ENCODE measurements at regions of chr9 and their contacts with region 1.

Region 1: GRCh38 chr9:129944506-129945116 is 98.4 kb downstream of the FNBP1 start:
- DNase-seq: peak in 8 of 9 donors; percentile 38 to 78 (median 70)
- ATAC-seq: peak; percentile 96
- H3K4me3 ChIP-seq: peak overlapping the region; percentile 20
- H3K4me3 Mint-ChIP-seq: peak overlapping the region; percentile 8 to 76 (median 64)
- H3K27ac ChIP-seq: peak overlapping the region; percentile 49
- H3K27ac Mint-ChIP-seq: peak overlapping the region; percentile 68 to 94 (median 85)
- H3K4me1 ChIP-seq: peaks cover 36 to 47% of the 10 kb centered on the region in 2 donors
- H3K4me1 Mint-ChIP-seq: peaks cover 35 to 75% (median 60%) of the 10 kb centered on the region in 7 donors
- H3K27me3 ChIP-seq: no peaks in the 10 kb centered on the region
- H3K27me3 Mint-ChIP-seq: no peaks in the 10 kb centered on the region

Region 2: DNA sequence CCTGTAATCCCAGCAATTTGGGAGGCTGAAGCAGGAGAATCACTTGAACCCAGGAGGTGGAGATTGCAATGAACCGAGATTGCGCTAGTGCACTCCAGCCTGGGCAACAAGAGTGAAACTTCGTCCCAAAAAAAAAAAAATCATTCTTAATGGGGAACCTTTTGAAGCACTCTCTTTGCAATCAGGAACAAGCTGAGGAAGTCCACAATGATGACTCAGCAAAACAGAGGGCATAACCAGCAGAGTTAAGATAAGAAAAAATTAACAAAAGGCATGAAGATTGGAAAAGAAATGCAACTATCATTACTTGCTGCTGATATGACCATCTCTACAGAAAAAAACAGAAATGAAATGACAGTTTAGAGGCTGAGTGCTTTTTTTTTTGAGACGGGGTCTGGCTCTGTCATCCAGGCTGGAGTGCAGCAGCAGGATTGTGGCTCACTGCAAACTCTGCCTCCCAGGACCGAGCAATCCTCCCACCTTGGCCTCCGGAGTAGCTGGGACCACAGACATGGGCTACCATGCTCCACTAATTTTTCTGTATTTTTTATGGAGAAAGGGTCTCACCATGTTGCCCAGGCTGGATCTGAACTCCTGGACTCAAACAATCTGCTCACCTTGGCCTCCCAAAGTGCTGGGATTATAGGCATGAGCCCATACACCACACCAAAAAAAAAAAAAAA is 10.4 kb after region 1 on chr9:
- CTCF ChIA-PET with region 1: no interaction called
- POLR2A ChIA-PET with region 1: interaction called, 60 read pairs
- intact Hi-C with region 1: no loop called
- DNase-seq: no peak
- ATAC-seq: peak; percentile 61
- H3K4me3 ChIP-seq: no peak overlapping the region
- H3K4me3 Mint-ChIP-seq: peak overlapping the region in 4 of 10 donors; percentile 26 to 52 (median 33)
- H3K27ac ChIP-seq: peak overlapping the region; percentile 3
- H3K27ac Mint-ChIP-seq: peak overlapping the region in 8 of 9 donors; percentile 5 to 81 (median 68)
- H3K4me1 ChIP-seq: peaks cover 7 to 29% of the 10 kb centered on the region in 2 donors
- H3K4me1 Mint-ChIP-seq: peaks cover 12 to 43% (median 39%) of the 10 kb centered on the region in 7 donors
- H3K27me3 ChIP-seq: no peaks in the 10 kb centered on the region
- H3K27me3 Mint-ChIP-seq: no peaks in the 10 kb centered on the region

Region 3: DNA sequence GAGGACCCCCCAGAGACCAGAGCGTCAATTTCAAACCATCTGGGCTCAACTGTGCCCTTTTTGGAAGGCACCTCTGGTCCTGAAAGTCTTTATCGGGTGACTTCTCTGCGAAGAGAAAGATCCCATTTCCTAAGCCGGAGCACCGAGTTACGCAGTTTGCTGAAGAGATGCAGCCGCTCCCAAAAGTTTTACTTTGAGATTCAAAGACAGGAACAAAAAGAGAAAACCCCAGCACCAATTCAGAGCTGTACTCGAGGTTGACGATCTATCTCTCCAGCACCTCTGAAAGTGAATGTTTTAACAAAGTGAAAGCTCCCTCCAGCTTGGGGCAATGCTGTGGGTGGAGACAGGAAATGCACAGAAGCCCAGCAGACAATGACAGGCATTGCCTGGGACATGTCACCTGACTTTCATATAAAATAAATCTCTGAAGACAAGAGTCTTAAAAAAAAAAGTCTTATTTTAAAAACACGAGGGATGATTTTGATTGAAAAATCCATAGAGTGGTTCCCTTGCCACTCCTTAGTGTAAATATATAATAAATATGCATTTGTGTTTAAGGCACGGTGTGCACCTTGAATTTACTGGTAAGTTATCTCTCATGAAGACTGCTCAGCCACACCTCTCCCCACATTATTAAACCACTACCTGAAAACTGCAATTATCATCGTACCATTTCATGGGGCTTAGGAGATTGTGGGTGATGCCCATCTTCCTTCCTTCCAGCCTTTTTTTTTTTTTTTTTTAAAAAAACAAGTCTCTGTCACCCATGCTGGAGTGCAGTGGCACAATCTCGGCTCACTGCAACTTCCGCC is 18.5 kb after region 1 on chr9:
- CTCF ChIA-PET with region 1: no interaction called
- POLR2A ChIA-PET with region 1: interaction called, 60 read pairs
- intact Hi-C with region 1: loop called (anchors 1 kb)
- DNase-seq: peak; percentile 23 to 92 (median 87)
- ATAC-seq: peak; percentile 98
- H3K4me3 ChIP-seq: peak overlapping the region; percentile 80
- H3K4me3 Mint-ChIP-seq: peak overlapping the region; percentile 66 to 95 (median 88)
- H3K27ac ChIP-seq: peak overlapping the region; percentile 92
- H3K27ac Mint-ChIP-seq: peak overlapping the region; percentile 89 to 99 (median 97)
- H3K4me1 ChIP-seq: peaks cover 34 to 47% of the 10 kb centered on the region in 2 donors
- H3K4me1 Mint-ChIP-seq: peaks cover 54 to 80% (median 67%) of the 10 kb centered on the region in 7 donors
- H3K27me3 ChIP-seq: no peaks in the 10 kb centered on the region
- H3K27me3 Mint-ChIP-seq: no peaks in the 10 kb centered on the region

Region 4: DNA sequence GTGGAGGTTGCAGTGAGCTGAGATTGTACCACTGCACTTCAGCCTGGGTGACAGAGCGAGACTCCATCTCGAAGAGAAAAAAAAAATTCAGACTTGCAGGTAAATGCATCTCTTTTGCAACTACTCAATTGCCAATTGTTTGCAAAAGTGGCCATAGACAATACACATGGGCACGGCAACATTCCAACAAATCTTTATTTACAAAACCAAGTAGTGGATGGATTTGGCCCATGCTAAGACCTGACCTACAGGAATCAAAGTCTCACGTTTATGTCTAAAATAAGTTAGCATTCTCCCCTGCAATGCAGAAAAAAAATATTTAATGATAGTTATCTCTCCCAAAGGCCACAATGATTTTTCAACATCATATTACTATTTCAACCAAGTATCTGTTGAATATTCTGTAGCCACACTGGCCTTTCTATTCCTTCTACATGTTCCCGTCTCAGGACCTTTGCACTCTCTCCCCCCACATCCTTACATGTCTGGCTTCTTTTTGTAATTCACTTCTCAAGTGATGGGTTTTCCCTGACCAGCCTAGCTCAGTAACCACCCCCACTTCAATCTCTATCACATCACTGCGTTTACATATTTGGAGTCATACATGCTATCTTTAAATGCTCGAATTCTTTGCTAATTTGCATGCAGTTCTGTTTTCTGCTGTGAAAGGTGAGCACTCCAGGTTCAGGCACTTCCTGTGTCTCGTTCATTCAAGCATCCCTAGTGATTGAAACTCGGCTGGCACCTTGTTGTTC is 44.2 kb after region 1 on chr9:
- CTCF ChIA-PET with region 1: no interaction called
- POLR2A ChIA-PET with region 1: no interaction called
- intact Hi-C with region 1: loop called in 1 of 2 experiments (anchors 2 kb)
- DNase-seq: peak in 4 of 9 donors; percentile 25 to 58 (median 29)
- ATAC-seq: peak; percentile 67
- H3K4me3 ChIP-seq: no peak overlapping the region
- H3K4me3 Mint-ChIP-seq: peak overlapping the region; percentile 18 to 85 (median 48)
- H3K27ac ChIP-seq: peak overlapping the region; percentile 76
- H3K27ac Mint-ChIP-seq: peak overlapping the region; percentile 54 to 98 (median 92)
- H3K4me1 ChIP-seq: peaks cover 43 to 48% of the 10 kb centered on the region in 2 donors
- H3K4me1 Mint-ChIP-seq: peaks cover 44 to 83% (median 73%) of the 10 kb centered on the region in 7 donors
- H3K27me3 ChIP-seq: no peaks in the 10 kb centered on the region
- H3K27me3 Mint-ChIP-seq: no peaks in the 10 kb centered on the region